ENCODE measurements at regions of chr12 and their contacts with region 1.

Region 1: GRCh38 chr12:29041621-29042020 is 107.5 kb upstream of the FAR2 start:
- DNase-seq: no peak
- ATAC-seq: no peak
- H3K4me3 ChIP-seq: no peak overlapping the region
- H3K4me3 Mint-ChIP-seq: no peak overlapping the region
- H3K27ac ChIP-seq: no peak overlapping the region
- H3K27ac Mint-ChIP-seq: no peak overlapping the region
- H3K4me1 ChIP-seq: no peaks in the 10 kb centered on the region
- H3K4me1 Mint-ChIP-seq: no peaks in the 10 kb centered on the region
- H3K27me3 ChIP-seq: no peaks in the 10 kb centered on the region
- H3K27me3 Mint-ChIP-seq: peaks cover 19 to 20% of the 10 kb centered on the region in 2 donors

Region 2: GRCh38 chr12:28963554-28963953 is 78.1 kb before region 1 on chr12:
- CTCF ChIA-PET with region 1: no interaction called
- POLR2A ChIA-PET with region 1: no interaction called
- DNase-seq: peak in 1 of 35 experiments; percentile 3
- ATAC-seq: no peak
- H3K4me3 ChIP-seq: no peak overlapping the region
- H3K4me3 Mint-ChIP-seq: no peak overlapping the region
- H3K27ac ChIP-seq: no peak overlapping the region
- H3K27ac Mint-ChIP-seq: no peak overlapping the region
- H3K4me1 ChIP-seq: no peaks in the 10 kb centered on the region
- H3K4me1 Mint-ChIP-seq: no peaks in the 10 kb centered on the region
- H3K27me3 ChIP-seq: peaks cover 0 to 4% of the 10 kb centered on the region in 2 experiments
- H3K27me3 Mint-ChIP-seq: peaks cover 8 to 28% of the 10 kb centered on the region in 2 donors

Region 3: DNA sequence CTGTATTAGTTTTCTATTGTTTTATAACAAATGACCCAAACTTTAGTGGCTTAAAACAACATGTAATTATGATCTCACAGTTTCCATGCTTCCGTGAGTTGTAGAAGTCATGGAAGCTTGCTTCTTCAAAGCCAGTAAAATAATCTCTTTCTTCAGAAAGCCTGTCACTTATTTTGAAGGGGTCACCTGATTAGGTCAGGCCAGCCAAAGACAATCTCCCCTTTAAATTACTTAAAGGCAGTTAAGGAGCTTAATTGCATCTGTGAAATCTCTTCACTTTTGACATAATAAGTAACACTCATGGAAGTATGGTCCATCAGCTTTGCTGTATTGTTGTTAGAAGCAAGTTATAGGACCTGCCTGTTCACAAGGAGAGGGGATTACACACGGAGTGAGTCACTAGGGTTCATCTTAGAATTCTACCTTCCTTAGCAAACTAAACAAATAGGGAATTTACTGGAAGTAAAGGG is 197.2 kb after region 1 on chr12:
- CTCF ChIA-PET with region 1: interaction called in 1 of 2 experiments, 10 read pairs
- POLR2A ChIA-PET with region 1: no interaction called
- DNase-seq: no peak
- ATAC-seq: no peak
- H3K4me3 ChIP-seq: no peak overlapping the region
- H3K4me3 Mint-ChIP-seq: no peak overlapping the region
- H3K27ac ChIP-seq: no peak overlapping the region
- H3K27ac Mint-ChIP-seq: no peak overlapping the region
- H3K4me1 ChIP-seq: no peaks in the 10 kb centered on the region
- H3K4me1 Mint-ChIP-seq: peaks cover 3 to 21% (median 11%) of the 10 kb centered on the region in 3 donors
- H3K27me3 ChIP-seq: no peaks in the 10 kb centered on the region
- H3K27me3 Mint-ChIP-seq: no peaks in the 10 kb centered on the region